Posterior vena cava (tissue), 2 donors: ENCODE measurements at regions of chr1 and their contacts with region 1.

Region 1: DNA sequence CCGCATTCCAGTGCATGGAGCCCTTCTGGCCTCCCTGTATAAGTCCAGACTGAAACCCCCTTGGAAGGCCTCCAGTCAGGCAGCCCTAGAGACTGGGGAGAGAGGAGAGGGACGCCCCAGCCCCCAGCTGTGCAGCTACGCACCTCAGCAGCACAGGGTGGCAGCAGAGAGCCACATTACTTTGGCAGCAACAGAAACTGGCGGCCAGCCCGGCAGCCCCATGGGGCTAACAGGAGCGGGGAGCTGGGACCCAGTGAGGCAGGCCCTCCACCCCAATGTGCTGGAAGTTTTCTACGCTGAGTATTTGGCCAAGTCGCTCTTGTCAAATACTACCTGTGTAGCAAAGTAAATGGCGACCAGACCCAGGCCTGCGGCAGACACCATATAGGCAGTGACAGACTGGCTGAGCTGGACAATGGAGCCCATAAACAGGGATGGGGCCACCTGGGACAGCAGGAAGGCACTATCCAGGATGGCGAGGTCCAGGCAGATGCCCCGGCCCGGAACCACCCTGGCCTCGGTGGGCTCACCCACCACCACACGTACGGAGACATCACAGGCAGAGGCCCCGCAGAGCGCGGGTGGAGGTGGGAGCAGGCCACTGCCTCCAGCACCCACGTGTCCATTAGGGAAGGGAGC is 21.2 kb downstream of the SLC45A3 start:
- DNase-seq: peak; percentile 92

Region 2: GRCh38 chr1:205528887-205529825 is 129.9 kb before region 1 on chr1:
- intact Hi-C with region 1: loop called (anchors 2 to 5 kb)
- DNase-seq: peak; percentile 94

Region 3: GRCh38 chr1:205591522-205592351 is 67.3 kb before region 1 on chr1:
- intact Hi-C with region 1: loop called (anchors 1 to 2 kb)
- DNase-seq: peak; percentile 94

Region 4: GRCh38 chr1:205711104-205712020 is 52.3 kb after region 1 on chr1:
- intact Hi-C with region 1: loop called in 1 of 2 experiments (anchors 2 kb)
- DNase-seq: no peak